Posterior cingulate gyrus (tissue), 11 donors: ENCODE measurements at regions of chr15 and their contacts with region 1.

Region 1: DNA sequence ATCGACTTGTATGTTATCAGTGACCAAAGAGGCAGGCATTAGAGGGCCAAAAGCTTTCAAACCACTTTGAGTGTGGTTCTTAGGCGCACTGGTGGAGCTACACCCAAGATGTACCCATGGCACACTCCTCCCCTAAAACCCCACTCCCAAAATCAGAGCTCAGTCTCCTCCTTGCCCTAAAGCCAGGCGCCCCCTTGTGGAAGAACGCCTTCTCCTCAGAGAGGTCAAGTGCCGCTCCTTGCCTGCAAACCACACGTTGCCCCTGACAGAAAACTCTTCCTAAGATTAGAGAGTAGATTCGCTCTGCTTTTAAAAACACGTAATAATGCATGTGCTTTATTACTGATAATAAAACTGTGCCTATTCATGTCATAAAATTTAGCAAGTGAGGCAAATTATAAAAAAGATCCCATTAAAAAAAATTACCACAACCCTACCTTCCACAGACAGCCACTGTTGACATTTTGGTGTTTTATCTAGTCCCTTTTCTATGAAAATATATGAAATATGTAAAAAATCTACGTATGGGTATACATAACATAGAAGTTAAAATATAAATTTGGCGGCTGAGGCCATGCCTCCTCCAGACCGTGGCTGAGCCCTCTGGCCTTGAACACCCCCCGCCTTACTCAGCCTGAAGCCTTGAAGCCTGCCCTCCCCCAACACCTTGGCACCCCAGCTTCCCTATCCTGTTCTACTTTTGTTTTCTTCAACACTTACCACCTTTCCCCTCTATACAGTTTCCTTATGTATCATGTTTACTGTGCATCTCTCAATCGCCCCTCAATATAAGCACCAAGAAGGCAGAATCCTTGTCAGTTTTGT is 33.5 kb downstream of the BCL2L10 start:
- DNase-seq: peak in 9 of 10 donors; percentile 46 to 96 (median 86)

Region 2: GRCh38 chr15:51888593-51889195 is 190.4 kb before region 1 on chr15:
- intact Hi-C with region 1: loop called (anchors 2 kb)
- DNase-seq: no peak

Region 3: DNA sequence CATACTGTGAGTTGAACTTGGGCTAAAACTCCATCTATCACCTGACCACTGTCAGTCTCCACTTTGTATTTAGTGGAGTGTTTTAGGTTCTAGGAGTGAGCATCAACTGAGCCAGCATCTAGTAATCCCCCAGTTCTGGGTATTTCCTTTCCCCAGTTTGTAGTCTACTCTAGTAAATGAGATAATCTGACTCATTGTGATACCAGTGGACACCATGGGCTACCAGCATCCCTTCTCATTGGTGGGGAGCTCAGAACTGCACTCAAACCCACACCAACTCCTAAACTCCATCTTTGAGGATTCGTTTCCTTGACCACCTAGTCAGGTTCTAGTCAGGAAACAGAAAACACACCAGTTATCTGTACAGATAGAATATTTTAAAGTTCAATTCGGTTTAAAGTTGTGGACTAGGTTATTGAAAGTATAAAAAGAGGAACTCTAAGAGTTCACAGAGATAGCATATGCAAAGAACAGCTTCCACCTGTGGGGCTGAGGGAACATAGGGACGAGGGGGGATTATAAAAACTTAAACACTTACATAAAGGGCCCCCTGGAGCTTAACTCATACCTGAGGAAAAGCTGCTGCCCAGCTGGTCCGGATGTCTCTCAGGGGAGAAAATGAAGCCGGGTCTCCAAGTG is 143.5 kb before region 1 on chr15:
- intact Hi-C with region 1: no loop called
- DNase-seq: no peak

Region 4: DNA sequence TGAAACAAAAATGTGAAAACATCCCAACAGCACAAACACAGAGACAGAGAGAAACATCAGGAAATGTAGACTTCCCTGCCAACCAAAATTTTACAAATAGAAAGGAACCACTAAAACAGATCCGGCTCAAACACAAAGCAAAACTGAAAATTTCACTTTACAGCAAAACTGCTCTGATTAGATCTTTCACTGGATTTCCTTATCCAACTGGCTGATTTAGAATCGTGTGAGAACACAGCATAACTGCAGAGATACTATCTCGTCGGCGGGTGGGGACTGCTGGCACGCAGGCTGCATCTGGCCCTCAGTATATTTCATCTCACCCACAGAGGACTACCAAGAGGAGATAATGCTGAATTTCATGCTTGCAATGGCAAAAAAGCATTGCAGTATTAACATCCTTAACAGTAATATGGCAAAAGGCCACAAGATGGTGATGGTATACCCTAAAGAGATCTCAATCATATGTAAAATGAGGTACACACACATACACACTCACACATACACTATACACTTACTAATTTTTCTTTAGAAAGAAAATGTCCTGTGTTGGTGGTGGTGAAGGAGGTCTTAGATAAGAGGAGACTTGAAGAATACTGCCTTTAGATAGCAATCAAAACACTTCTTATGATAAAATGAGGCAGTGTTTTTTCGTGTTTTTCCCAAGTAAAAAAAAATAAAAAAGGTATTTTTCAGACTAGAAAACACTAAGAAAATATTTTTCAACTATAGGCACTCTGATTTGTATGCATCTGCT is 96.9 kb before region 1 on chr15:
- intact Hi-C with region 1: loop called (anchors 5 kb)
- DNase-seq: peak in 2 of 10 donors; percentile 30 to 40

Region 5: DNA sequence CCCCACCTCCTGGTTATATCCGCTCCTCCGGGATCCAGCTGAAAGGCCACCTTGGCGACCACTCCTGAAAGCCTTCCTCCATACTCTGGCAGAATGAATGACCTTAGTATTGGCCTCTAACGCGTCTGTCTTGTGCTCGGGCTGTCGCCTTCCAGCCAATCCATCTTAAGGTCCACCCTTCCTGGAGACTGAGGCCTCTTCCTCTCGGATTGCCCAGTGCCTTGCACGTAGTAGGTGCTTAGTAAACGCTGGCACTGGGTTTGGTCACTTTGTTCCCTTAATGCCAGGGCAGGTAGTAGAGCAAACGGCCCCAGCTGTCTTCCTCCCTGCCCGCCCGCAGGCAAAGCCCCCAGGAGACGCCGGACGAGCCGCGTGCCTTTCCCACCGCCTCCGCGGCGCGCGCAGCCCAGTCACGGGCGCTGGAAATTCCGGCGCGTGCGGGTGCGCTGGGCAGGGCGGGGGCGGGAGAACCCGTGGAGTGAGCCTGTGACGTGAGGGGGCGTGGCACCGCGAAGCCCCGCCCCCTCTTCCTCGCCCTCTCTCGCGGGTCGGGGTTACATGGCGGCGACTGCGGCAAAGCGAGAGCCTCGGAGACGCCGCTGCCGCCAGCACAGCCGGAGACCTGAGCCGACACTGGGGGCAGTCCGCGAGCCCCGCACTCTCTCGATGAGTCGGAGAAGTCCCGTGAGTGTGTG is 60.2 kb before region 1 on chr15 and contains the start of gene MAPK6:
- intact Hi-C with region 1: loop called (anchors 1 kb)
- DNase-seq: peak; percentile 84 to 99 (median 88)

Region 6: DNA sequence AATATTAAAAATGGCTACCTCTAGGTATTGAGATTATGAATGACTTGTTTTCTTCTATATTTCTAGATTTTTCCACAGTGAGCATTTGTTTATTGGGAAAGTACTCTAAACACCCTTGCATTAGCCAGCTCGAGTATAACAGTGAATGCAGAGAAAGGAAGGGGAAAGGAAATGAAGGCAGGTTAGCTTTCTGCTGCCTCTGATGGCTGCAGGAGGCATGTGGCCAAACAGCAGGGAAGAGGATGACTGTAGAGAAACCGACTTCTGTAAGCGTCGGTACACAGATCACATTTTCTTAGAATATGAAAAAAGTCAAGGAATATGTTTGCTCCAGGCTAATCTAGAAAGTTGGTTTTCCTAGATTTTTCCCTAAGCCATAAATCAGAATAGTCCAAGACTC is 92.3 kb after region 1 on chr15:
- intact Hi-C with region 1: no loop called
- DNase-seq: peak in 1 of 10 donors; percentile 46